ENCODE measurements at regions of chr4 and their contacts with region 1.

Region 1: GRCh38 chr4:186725469-186726425 is 2.1 kb upstream of the FAT1 start:
- DNase-seq: peak; percentile 90
- H3K4me3 ChIP-seq: peak overlapping the region; percentile 80 to 86
- H3K27ac ChIP-seq: peak overlapping the region; percentile 84 to 92
- H3K4me1 ChIP-seq: peaks cover 21% of the 10 kb centered on the region
- H3K27me3 ChIP-seq: no peaks in the 10 kb centered on the region
- CTCF ChIP-seq: peak in 2 of 3 experiments; percentile 48 to 52
- POLR2A ChIP-seq: no peak

Region 2: GRCh38 chr4:186416451-186417060 is 309.2 kb before region 1 on chr4:
- intact Hi-C with region 1: no loop called
- DNase-seq: no peak
- H3K4me3 ChIP-seq: no peak overlapping the region
- H3K27ac ChIP-seq: no peak overlapping the region
- H3K4me1 ChIP-seq: no peaks in the 10 kb centered on the region
- H3K27me3 ChIP-seq: no peaks in the 10 kb centered on the region
- CTCF ChIP-seq: no peak
- POLR2A ChIP-seq: no peak

Region 3: GRCh38 chr4:186676531-186677161 is 49.1 kb before region 1 on chr4:
- intact Hi-C with region 1: loop called (anchors 10 kb)
- DNase-seq: no peak
- H3K4me3 ChIP-seq: no peak overlapping the region
- H3K27ac ChIP-seq: no peak overlapping the region
- H3K4me1 ChIP-seq: peaks cover 13% of the 10 kb centered on the region
- H3K27me3 ChIP-seq: no peaks in the 10 kb centered on the region
- CTCF ChIP-seq: no peak
- POLR2A ChIP-seq: no peak

Region 4: DNA sequence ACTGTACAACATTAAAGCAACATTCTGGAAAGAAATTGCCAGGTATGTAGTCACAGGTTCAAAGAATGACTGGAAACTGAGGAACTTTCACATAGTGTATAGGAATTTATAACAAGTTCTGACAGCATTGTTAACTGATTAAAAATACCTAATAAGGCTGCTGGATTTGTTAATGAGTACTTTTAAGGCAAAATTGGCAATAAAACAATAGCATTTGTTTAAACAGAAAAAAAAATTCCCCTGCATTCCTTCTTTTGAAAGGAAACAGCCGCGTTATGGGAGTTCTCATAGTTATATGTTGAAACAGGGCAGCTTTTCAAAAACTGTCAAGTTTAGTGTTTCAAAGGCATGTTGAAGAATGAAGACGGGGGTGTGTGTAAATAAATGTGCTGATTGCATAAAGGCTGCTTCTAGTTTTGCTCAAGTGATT is 280.5 kb after region 1 on chr4:
- intact Hi-C with region 1: no loop called
- DNase-seq: no peak
- H3K4me3 ChIP-seq: no peak overlapping the region
- H3K27ac ChIP-seq: no peak overlapping the region
- H3K4me1 ChIP-seq: no peaks in the 10 kb centered on the region
- H3K27me3 ChIP-seq: no peaks in the 10 kb centered on the region
- CTCF ChIP-seq: no peak
- POLR2A ChIP-seq: no peak

Measured in testis (tissue), 5 donors.